ENCODE measurements at regions of chr9 and their contacts with region 1.

Region 1: DNA sequence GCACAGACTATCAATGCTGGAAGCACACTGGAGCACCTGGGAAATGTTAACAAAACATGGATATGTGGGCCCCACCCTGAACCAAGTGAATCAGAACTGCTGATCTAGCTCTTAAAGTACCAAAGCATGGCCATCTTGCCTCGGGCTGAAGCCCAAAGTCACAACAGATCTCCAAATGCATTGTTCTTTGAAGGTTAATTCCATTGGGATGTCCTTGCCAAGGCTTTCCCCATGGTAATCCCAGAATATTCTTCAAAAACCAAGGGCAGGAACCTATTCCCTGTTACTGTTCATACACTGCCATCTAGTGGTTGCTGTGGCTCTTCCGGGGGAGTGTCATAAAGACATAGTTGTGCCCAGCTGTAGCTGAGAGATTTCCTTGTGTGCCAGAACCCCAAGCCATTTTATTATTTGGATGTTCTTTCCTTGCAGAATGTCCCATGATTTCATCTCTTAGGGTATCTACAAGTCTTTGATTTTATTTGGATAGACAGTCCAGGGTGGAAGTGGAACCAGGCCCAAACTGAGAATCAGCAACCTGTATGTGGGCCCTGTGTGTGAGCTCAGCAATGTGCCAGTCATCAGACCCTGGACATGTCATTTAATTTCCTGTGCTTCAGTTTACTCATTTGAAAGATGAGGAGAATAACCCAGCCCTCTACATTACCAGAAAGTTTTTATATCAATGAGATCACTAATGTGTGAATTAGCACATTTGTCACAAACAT is 290.0 kb downstream of the ACTL7B start:
- DNase-seq: peak in 1 of 2 donors; percentile 73
- H3K4me3 ChIP-seq: no peak overlapping the region
- H3K27ac ChIP-seq: no peak overlapping the region
- H3K4me1 ChIP-seq: peaks cover 0 to 2% of the 10 kb centered on the region in 2 donors
- H3K27me3 ChIP-seq: no peaks in the 10 kb centered on the region
- CTCF ChIP-seq: peak; percentile 68 to 90 (median 69)

Region 2: GRCh38 chr9:107465467-107466451 is 1100.1 kb before region 1 on chr9:
- intact Hi-C with region 1: loop called (anchors 1 kb)
- DNase-seq: peak in 1 of 2 donors; percentile 84
- H3K4me3 ChIP-seq: peak overlapping the region; percentile 64 to 68
- H3K27ac ChIP-seq: no peak overlapping the region
- H3K4me1 ChIP-seq: no peaks in the 10 kb centered on the region
- H3K27me3 ChIP-seq: peaks cover 6% of the 10 kb centered on the region
- CTCF ChIP-seq: peak; percentile 92 to 95 (median 92)

Region 3: GRCh38 chr9:107484117-107484723 is 1081.6 kb before region 1 on chr9:
- intact Hi-C with region 1: loop called (anchors 5 kb)
- DNase-seq: no peak
- H3K4me3 ChIP-seq: peak overlapping the region in 1 of 2 donors; percentile 95
- H3K27ac ChIP-seq: no peak overlapping the region
- H3K4me1 ChIP-seq: peaks cover 0 to 6% of the 10 kb centered on the region in 2 donors
- H3K27me3 ChIP-seq: no peaks in the 10 kb centered on the region
- CTCF ChIP-seq: peak; percentile 47 to 65 (median 63)

Region 4: DNA sequence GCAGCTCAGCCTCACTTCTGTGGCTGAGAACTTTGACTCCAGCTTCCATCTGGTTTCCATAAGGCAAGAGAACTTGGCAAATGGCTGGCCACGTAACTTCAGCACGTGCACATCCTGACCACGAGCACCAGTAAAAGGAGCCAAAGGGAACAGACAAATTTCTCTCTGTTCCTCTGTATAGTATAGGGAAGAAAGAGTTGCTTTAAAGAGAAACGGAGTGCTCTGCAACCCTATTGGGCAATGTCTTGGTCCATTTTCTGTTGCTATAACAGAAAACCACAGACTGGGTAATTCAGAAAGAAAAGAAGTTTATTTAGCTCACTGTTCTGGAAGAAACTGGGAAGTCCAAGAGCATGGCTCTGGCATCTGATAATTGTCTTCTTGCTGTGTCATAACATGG is 268.7 kb before region 1 on chr9:
- intact Hi-C with region 1: no loop called
- DNase-seq: peak in 1 of 2 donors; percentile 64
- H3K4me3 ChIP-seq: no peak overlapping the region
- H3K27ac ChIP-seq: no peak overlapping the region
- H3K4me1 ChIP-seq: no peaks in the 10 kb centered on the region
- H3K27me3 ChIP-seq: no peaks in the 10 kb centered on the region
- CTCF ChIP-seq: no peak

Region 5: DNA sequence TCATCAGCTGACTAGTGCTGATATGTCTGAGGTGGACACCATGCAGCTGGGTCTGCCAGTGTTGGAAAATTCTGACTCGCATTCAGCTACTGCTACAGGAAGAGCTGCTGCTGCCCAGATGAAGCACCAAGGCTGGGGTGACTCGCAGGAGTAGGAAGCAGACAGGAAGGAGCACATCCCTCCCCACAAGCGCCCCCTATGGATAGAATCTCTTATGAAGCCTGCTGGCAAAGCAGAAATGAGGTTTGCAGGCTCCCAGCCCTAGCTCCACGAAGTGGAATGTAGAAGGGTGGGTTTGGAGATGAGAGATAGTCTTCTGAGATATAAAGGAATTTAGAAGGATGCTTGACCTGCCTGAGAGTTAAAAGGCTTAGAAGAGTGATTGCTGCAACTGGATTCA is 153.1 kb before region 1 on chr9:
- intact Hi-C with region 1: loop called (anchors 5 kb)
- DNase-seq: no peak
- H3K4me3 ChIP-seq: no peak overlapping the region
- H3K27ac ChIP-seq: no peak overlapping the region
- H3K4me1 ChIP-seq: no peaks in the 10 kb centered on the region
- H3K27me3 ChIP-seq: no peaks in the 10 kb centered on the region
- CTCF ChIP-seq: no peak

Region 6: GRCh38 chr9:108654566-108654965 is 88.8 kb after region 1 on chr9:
- intact Hi-C with region 1: no loop called
- DNase-seq: no peak
- H3K4me3 ChIP-seq: no peak overlapping the region
- H3K27ac ChIP-seq: no peak overlapping the region
- H3K4me1 ChIP-seq: no peaks in the 10 kb centered on the region
- H3K27me3 ChIP-seq: no peaks in the 10 kb centered on the region
- CTCF ChIP-seq: no peak

Measured in ascending aorta (tissue), 2 donors.